CD8-positive, alpha-beta T cell (primary cell): ENCODE measurements at regions of chr2 and their contacts with region 1.

Region 1: GRCh38 chr2:208274748-208275147 is 8.7 kb downstream of the PIKFYVE start:
- DNase-seq: no peak
- ATAC-seq: no peak
- H3K4me3 ChIP-seq: no peak overlapping the region
- H3K4me3 Mint-ChIP-seq: no peak overlapping the region
- H3K27ac ChIP-seq: no peak overlapping the region
- H3K27ac Mint-ChIP-seq: peak overlapping the region; percentile 19
- H3K4me1 ChIP-seq: no peaks in the 10 kb centered on the region
- H3K4me1 Mint-ChIP-seq: peaks cover 33% of the 10 kb centered on the region
- H3K27me3 ChIP-seq: no peaks in the 10 kb centered on the region
- H3K27me3 Mint-ChIP-seq: no peaks in the 10 kb centered on the region
- CTCF ChIP-seq: no peak

Region 2: DNA sequence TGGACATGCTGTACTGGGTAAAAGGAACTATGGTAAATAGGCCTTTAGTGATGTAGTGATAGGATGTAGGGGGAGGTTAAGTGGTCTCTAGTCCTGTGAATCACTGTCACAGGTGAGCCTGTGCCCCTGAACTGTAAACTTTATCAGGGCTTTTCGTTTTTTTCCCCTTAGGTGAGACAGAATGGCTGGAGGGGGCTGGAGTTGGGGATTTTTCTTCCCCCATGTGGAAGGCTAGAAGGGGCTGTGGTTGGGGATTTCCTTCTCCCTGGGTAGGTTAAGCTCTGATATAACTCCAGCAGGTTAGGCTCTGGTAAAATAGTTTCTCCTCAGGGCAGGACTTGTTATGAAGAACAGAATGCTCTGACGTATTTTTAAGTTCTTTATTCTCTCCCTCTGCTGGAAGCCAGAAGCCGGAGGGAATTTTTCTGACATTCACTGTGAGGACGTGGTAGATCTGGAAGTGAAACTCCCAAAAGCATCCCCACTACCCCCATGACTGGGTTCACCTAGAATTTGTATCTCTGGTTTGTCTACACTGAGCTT is 19.8 kb after region 1 on chr2:
- CTCF ChIA-PET with region 1: no interaction called
- POLR2A ChIA-PET with region 1: no interaction called
- intact Hi-C with region 1: loop called in 1 of 2 experiments (anchors 1 kb)
- DNase-seq: peak in 2 of 9 experiments; percentile 4 to 26
- ATAC-seq: no peak
- H3K4me3 ChIP-seq: no peak overlapping the region
- H3K4me3 Mint-ChIP-seq: no peak overlapping the region
- H3K27ac ChIP-seq: no peak overlapping the region
- H3K27ac Mint-ChIP-seq: peak overlapping the region; percentile 47
- H3K4me1 ChIP-seq: peaks cover 5% of the 10 kb centered on the region
- H3K4me1 Mint-ChIP-seq: peaks cover 56% of the 10 kb centered on the region
- H3K27me3 ChIP-seq: no peaks in the 10 kb centered on the region
- H3K27me3 Mint-ChIP-seq: no peaks in the 10 kb centered on the region
- CTCF ChIP-seq: no peak

Region 3: DNA sequence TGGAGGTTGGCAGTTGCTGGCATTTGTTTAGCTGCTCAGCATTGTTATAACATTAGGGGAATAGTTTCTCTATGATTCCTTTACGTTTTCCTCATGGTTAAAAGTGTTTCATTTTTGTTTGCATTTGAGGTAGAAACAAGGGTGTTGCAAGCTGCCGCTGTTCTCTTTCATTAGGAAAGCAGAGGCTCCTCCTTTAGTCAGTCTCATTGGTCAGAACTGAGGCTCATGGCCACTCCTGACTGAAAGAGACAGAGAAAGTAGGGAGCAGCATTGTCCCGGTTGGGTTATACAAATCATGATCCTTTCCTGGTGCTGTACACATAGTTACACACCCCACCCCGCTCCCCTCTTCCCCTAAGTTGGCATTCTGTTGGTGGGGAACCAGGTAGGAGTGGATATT is 72.0 kb after region 1 on chr2:
- CTCF ChIA-PET with region 1: no interaction called
- POLR2A ChIA-PET with region 1: no interaction called
- intact Hi-C with region 1: loop called in 1 of 2 experiments (anchors 10 kb)
- DNase-seq: no peak
- ATAC-seq: no peak
- H3K4me3 ChIP-seq: no peak overlapping the region
- H3K4me3 Mint-ChIP-seq: no peak overlapping the region
- H3K27ac ChIP-seq: no peak overlapping the region
- H3K27ac Mint-ChIP-seq: peak overlapping the region; percentile 62
- H3K4me1 ChIP-seq: no peaks in the 10 kb centered on the region
- H3K4me1 Mint-ChIP-seq: no peaks in the 10 kb centered on the region
- H3K27me3 ChIP-seq: no peaks in the 10 kb centered on the region
- H3K27me3 Mint-ChIP-seq: no peaks in the 10 kb centered on the region
- CTCF ChIP-seq: no peak